ENCODE measurements at regions of chr7 and their contacts with region 1.

Region 1: DNA sequence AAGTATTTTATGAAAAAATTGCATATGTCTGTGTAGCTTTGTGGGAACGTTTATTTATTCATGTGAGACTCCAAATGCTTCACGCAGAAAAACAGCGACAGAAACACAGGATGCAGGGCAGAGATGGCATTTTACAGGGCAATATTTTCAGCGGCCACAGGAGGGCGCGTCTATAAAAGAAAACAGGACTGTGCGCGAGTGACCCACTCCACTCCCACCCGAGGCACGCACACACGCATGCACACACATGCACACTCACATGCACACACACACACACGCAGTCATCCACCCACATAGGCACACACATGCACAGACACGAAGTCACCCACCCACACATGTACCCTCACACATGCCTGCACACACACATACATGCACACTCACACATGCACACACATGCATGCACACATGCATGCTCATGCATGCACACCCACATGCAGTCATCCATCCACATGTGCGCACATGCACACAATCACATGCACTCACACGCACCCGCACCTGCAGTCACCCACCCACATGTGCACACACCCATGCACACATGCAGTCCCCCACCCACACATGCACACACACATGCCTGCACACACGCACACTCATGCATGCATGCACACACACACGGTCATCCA is 96.3 kb downstream of the DNAJB6 start:
- DNase-seq: peak; percentile 75
- ATAC-seq: peak; percentile 76
- H3K4me3 Mint-ChIP-seq: no peak overlapping the region
- H3K27ac Mint-ChIP-seq: no peak overlapping the region
- H3K4me1 Mint-ChIP-seq: peaks cover 18% of the 10 kb centered on the region
- H3K27me3 Mint-ChIP-seq: peaks cover 16% of the 10 kb centered on the region

Region 2: DNA sequence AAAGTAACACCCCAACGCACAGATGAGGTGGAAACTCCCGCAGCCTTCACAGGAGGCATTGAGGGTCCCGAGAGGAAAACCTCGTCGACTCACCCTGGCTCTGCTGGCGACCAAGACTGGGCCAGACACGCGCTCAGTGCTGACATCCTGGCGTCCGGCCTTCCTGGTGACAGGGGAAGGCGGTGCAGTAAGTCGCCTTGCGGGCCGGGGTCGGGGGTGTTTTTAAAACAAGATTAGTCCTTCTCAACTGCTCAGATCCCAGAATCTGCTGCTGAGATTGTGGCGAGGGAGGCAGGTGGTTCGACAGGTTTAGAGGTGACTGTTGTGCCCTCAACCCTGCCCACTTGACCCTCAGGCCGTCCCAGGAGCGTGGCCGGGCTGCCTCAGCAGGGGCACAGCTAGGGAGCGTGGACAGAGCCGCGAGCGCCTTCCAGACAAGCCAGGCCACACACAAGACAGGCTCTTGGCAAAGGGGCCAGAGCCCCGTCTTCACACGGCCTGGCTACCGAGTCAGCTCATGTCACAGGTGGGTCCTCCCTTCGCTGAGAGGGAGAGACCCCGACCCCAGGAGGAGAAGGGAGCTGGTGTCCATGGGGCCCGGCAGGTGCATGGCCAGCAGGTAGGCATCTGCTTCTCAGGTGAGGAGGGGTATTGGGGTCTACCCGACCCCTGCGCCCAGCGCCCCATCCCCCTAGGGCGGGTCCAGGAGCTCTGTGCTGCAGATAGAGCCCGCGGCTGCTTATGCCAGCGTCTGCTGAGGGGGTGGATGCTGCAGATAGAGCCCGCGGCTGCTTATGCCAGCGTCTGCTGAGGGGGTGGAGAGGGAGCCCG is 14.6 kb before region 1 on chr7:
- CTCF ChIA-PET with region 1: interaction called, 13 read pairs
- DNase-seq: no peak
- ATAC-seq: no peak
- H3K4me3 Mint-ChIP-seq: no peak overlapping the region
- H3K27ac Mint-ChIP-seq: no peak overlapping the region
- H3K4me1 Mint-ChIP-seq: peaks cover 2% of the 10 kb centered on the region
- H3K27me3 Mint-ChIP-seq: no peaks in the 10 kb centered on the region

Region 3: DNA sequence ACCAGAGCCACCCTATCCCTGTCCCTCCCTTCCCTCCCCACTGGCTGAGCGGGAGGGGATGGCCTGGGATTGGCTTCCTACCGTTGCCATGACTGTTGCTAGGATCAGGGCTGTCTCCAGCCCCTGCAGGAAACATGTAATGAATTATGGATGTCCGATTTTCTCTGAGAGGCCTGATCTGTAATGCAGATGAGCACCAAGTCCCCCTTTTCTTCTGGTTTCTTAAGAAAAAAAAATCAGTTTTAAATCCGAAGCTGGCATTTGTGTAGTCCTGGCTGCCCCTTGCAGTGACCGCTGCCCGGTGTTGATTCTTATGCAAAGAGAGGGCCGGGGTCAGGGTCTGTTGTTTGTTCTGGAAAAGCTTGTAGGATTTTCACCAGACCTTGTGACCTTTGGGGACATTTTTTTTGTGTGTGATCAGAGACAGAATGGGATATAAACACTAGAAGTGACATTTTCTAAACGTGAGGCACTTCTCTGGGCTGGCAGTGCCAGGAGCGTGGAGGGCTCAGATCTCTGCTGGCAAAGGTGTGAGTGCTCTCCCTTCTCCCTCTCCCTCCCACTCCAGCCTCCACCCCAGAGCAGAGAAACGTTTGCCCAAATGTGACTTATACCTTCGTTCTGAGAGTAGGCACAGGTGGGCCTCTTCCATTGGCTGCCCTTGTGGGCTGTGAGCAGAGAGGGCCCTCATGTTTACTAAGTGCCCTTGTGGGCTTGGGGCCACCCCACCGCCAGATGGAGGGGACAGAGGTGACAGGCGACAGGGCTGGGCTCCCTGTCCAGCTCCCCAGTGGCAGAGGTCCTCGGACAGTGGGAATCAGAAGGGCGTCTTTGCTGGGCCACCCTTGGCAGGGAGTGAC is 31.3 kb after region 1 on chr7:
- CTCF ChIA-PET with region 1: no interaction called
- DNase-seq: peak; percentile 38
- ATAC-seq: no peak
- H3K4me3 Mint-ChIP-seq: no peak overlapping the region
- H3K27ac Mint-ChIP-seq: no peak overlapping the region
- H3K4me1 Mint-ChIP-seq: peaks cover 16% of the 10 kb centered on the region
- H3K27me3 Mint-ChIP-seq: peaks cover 22% of the 10 kb centered on the region